HEK293 (cell line): ENCODE measurements at regions of chr2 and their contacts with region 1.

Region 1: GRCh38 chr2:47767880-47768609 is 14.9 kb upstream of the MSH6 start:
- H3K4me3 ChIP-seq: no peak overlapping the region
- H3K27ac ChIP-seq: no peak overlapping the region
- H3K4me1 ChIP-seq: no peaks in the 10 kb centered on the region; the same call in 1 of the 2 replicates
- CTCF ChIP-seq: peak; percentile 81

Region 2: GRCh38 chr2:47336259-47337238 is 431.5 kb before region 1 on chr2:
- CTCF ChIA-PET with region 1: interaction called, 27 read pairs
- POLR2A ChIA-PET with region 1: no interaction called
- H3K4me3 ChIP-seq: no peak overlapping the region
- H3K27ac ChIP-seq: no peak overlapping the region
- H3K4me1 ChIP-seq: no peaks in the 10 kb centered on the region
- CTCF ChIP-seq: no peak

Region 3: DNA sequence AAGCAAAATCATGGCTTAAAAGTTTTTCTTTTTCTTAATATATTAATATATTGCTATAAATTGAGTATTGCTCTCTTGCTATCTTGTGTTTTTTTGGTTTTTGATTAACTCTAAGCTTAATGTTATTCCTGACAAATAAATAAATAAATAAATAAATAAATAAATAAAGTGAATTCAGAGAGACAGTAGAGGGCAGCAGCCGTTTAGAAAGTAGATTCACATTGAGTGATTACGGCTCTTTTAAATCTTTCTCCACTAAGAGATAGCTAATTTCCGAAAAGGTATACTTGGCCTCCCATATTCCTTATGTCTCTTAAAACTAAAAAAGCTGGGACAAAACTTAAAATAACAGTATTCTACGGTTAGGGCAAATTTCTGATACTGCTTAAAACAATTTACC is 330.8 kb before region 1 on chr2:
- CTCF ChIA-PET with region 1: interaction called, 72 read pairs
- POLR2A ChIA-PET with region 1: no interaction called
- H3K4me3 ChIP-seq: no peak overlapping the region
- H3K27ac ChIP-seq: no peak overlapping the region
- H3K4me1 ChIP-seq: no peaks in the 10 kb centered on the region
- CTCF ChIP-seq: no peak

Region 4: GRCh38 chr2:47594656-47595055 is 173.4 kb before region 1 on chr2:
- CTCF ChIA-PET with region 1: interaction called, 10 read pairs
- POLR2A ChIA-PET with region 1: no interaction called
- H3K4me3 ChIP-seq: no peak overlapping the region
- H3K27ac ChIP-seq: no peak overlapping the region
- H3K4me1 ChIP-seq: no peaks in the 10 kb centered on the region
- CTCF ChIP-seq: no peak

Region 5: GRCh38 chr2:47653902-47654789 is 113.9 kb before region 1 on chr2:
- CTCF ChIA-PET with region 1: interaction called, 10 read pairs
- POLR2A ChIA-PET with region 1: no interaction called
- H3K4me3 ChIP-seq: no peak overlapping the region
- H3K27ac ChIP-seq: no peak overlapping the region
- H3K4me1 ChIP-seq: 0 out of 2 replicates have a peak, but pooled peaks cover 2% of the 10 kb centered on the region
- CTCF ChIP-seq: peak; percentile 29; the same call in 1 of the 2 replicates